ENCODE measurements at regions of chr4 and their contacts with region 1.

Region 1: DNA sequence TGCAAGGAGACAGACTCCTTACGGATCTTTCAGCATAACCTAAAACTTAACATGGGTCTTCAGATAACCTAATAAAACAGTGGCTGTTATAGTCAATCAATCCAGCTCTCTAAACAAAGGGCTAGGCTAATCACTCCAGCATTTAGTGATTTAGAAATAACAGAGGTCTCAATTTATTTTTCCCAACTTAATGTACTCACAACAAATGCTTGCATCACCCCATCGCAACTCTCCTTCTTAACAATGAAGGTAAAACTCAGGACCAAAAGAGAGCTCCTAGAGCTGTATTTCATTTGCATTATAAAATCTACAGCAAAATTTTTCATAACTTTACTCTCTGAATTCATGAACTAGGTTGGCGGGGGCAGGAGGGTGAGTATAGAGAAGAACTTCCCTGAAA is 1.1 kb downstream of the LIN54 start:
- DNase-seq: no peak
- H3K4me3 ChIP-seq: peak overlapping the region in 1 of 4 donors; percentile 68
- H3K27ac ChIP-seq: peak overlapping the region in 1 of 5 donors; percentile 88
- H3K4me1 ChIP-seq: peaks cover 4 to 31% of the 10 kb centered on the region in 2 donors
- H3K27me3 ChIP-seq: no peaks in the 10 kb centered on the region
- CTCF ChIP-seq: no peak
- POLR2A ChIP-seq: no peak

Region 2: GRCh38 chr4:82733636-82734035 is 275.9 kb before region 1 on chr4:
- intact Hi-C with region 1: no loop called
- DNase-seq: peak; percentile 64 to 84 (median 73)
- H3K4me3 ChIP-seq: no peak overlapping the region
- H3K27ac ChIP-seq: peak overlapping the region; percentile 24 to 87 (median 72)
- H3K4me1 ChIP-seq: peaks cover 43 to 55% of the 10 kb centered on the region in 2 donors
- H3K27me3 ChIP-seq: no peaks in the 10 kb centered on the region
- CTCF ChIP-seq: no peak
- POLR2A ChIP-seq: peak in 1 of 2 donors; percentile 29

Region 3: DNA sequence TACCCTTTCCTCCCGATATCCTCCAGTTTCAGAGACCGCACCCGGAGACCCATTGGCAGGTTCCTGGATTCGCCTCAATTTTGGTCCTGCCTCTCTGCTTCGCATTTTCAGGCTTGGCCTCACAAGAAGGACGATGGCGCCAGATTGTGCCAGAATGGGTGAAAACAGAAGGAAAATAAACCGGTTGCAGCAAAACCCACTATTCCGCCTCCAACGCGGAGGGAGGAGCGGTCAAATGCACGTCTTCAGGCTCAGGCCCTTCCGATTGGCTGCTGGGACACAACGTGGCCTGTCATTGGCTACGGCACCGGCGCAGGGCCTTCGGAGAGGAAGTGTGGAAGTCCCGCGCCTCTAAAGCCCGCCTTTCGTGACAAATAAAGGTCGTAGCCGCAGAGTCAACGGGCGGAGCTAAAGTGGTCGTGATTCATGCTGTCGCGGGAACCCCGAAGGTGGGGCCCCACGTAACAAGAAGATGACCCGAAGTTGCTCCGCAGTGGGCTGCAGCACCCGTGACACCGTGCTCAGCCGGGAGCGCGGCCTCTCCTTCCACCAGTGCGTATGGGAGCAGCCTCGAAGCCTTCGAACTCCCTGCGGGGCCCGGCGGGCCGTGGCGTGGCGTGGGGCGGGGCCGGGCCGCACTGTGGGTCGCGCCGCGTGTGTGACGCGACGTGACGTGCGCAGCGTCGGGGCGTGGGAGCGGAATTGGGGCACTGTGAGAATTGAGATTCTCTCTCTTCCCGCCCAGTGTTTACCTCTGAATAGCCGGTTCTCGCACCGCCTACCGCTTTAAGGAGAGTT is 109.0 kb before region 1 on chr4 and contains the start of gene THAP9:
- intact Hi-C with region 1: loop called in 1 of 2 experiments (anchors 10 kb)
- DNase-seq: peak; percentile 98 to 100 (median 99)
- H3K4me3 ChIP-seq: peak within 1 kb of the TSS; percentile 43 to 94 (median 62)
- H3K27ac ChIP-seq: peak within 1 kb of the TSS; percentile 90 to 99 (median 99)
- H3K4me1 ChIP-seq: peaks cover 25 to 38% of the 10 kb centered on the region in 2 donors
- H3K27me3 ChIP-seq: no peaks in the 10 kb centered on the region
- CTCF ChIP-seq: peak in 2 of 6 experiments; percentile 3 to 9
- POLR2A ChIP-seq: peak; percentile 74 to 91
- total RNA-seq, gene THAP9: 2.2 to 12.3 (median 3.7) TPM

Measured in adrenal gland (tissue), 19 donors.